AG04449 (cell line): ENCODE measurements at regions of chr17 and their contacts with region 1.

Region 1: GRCh38 chr17:38868817-38869525 is 887 bp upstream of the LASP1 start:
- DNase-seq: no peak
- H3K4me3 ChIP-seq: peak overlapping the region; percentile 99
- CTCF ChIP-seq: peak; percentile 35

Region 2: GRCh38 chr17:38752119-38752929 is 116.6 kb before region 1 on chr17 and contains the start of gene PSMB3:
- CTCF ChIA-PET with region 1: no interaction called
- POLR2A ChIA-PET with region 1: interaction called, 19 read pairs
- DNase-seq: peak; percentile 97
- H3K4me3 ChIP-seq: peak within 1 kb of the TSS; percentile 100
- CTCF ChIP-seq: no peak

Region 3: GRCh38 chr17:38853292-38854219 is 15.4 kb before region 1 on chr17 and contains the start of gene RPL23:
- CTCF ChIA-PET with region 1: interaction called, 16 read pairs
- POLR2A ChIA-PET with region 1: interaction called, 57 read pairs
- DNase-seq: peak; percentile 79
- H3K4me3 ChIP-seq: peak within 1 kb of the TSS; percentile 68
- CTCF ChIP-seq: no peak

Region 4: GRCh38 chr17:38879878-38880682 is 11.1 kb after region 1 on chr17:
- CTCF ChIA-PET with region 1: interaction called, 12 read pairs
- POLR2A ChIA-PET with region 1: interaction called, 37 read pairs
- DNase-seq: no peak
- H3K4me3 ChIP-seq: peak overlapping the region; percentile 29
- CTCF ChIP-seq: no peak

Region 5: DNA sequence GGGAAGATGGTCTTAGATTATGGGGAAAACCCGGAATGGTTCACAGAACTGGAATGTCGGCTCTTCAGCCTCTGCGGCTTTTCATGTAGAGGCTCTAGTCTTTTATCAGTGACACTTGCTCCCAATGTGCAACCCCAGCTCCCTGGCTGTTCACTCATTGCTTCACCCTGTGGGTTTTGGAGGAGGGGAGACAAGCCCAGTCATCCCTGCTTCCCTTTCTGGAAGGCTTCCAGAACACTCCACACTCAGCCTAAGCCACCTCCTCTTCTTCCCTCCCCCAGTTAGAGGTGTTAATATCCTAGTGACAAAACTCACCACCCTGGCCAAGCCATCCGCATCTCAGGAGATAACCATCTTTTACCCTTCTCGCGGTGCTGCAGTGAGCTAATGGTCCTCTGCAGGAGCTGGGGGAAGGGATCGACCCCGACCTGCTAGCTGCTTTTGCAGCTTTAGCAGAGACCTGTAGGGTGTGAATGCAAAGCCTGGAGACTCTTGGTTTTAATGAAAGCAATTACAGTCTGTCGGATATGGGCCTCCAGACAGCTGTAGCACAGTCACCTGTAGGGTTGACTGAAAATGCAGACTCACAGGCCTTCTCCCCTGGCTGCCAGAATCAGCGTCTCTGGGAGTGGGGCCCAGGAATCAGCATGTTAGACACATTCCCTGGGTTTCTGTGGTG is 32.1 kb after region 1 on chr17:
- CTCF ChIA-PET with region 1: interaction called, 4 read pairs
- POLR2A ChIA-PET with region 1: interaction called, 14 read pairs
- DNase-seq: peak; percentile 89
- H3K4me3 ChIP-seq: no peak overlapping the region
- CTCF ChIP-seq: no peak